ENCODE measurements at regions of chr7 and their contacts with region 1.

Region 1: GRCh38 chr7:47474937-47475878 is 106.7 kb downstream of the TNS3 start:
- DNase-seq: peak; percentile 98
- ATAC-seq: peak; percentile 85
- H3K4me3 ChIP-seq: peak overlapping the region in 1 of 3 experiments; percentile 44; a peak in 2 of 6 replicates
- H3K27ac ChIP-seq: peak overlapping the region; percentile 82
- H3K4me1 ChIP-seq: peaks cover 97% of the 10 kb centered on the region
- H3K27me3 ChIP-seq: no peaks in the 10 kb centered on the region
- CTCF ChIP-seq: peak; percentile 55
- EP300 ChIP-seq: peak; percentile 67 to 87
- POLR2A ChIP-seq: peak in 1 of 2 experiments; percentile 88; a peak in 2 of 4 replicates
- RAD21 ChIP-seq: peak; percentile 75

Region 2: DNA sequence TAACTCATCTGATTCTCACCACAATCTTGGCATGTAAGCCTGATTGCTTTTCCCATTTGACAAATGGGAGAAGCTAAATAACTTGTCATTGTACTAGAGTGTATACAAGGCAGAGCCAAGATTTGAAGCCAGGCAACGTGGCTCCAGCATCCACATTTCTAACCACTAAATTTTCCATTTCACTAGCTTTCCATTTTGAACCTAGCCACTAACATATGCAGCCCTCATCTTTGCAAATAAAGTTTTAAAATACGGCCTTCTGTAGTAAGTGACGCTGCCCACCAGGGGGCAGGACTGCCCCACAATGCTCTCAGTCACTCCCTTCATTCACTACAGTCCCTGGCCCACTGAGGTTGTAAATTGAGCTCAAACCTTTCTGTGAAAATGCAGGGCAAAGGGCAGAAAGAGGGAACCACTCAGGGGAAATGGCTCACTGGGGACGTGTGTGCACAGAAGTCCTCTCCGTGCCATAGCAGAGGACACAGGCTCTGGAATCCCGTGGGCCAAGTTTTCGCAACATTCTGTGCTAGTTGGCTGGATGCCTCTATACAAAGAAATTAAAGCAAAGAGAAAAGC is 209.0 kb before region 1 on chr7:
- CTCF ChIA-PET with region 1: no interaction called
- POLR2A ChIA-PET with region 1: interaction called, 5 read pairs
- in situ Hi-C with region 1: no loop called
- intact Hi-C with region 1: loop called (anchors 1 kb)
- DNase-seq: peak; percentile 82
- ATAC-seq: peak; percentile 93
- H3K4me3 ChIP-seq: peak overlapping the region in 1 of 3 experiments; percentile 15; a peak in 1 of 6 replicates
- H3K27ac ChIP-seq: peak overlapping the region; percentile 50
- H3K4me1 ChIP-seq: peaks cover 14% of the 10 kb centered on the region
- H3K27me3 ChIP-seq: no peaks in the 10 kb centered on the region
- CTCF ChIP-seq: peak; percentile 93
- EP300 ChIP-seq: no peak
- POLR2A ChIP-seq: no peak
- RAD21 ChIP-seq: peak; percentile 91

Region 3: GRCh38 chr7:47285860-47286522 is 189.2 kb before region 1 on chr7:
- CTCF ChIA-PET with region 1: no interaction called
- POLR2A ChIA-PET with region 1: no interaction called
- in situ Hi-C with region 1: no loop called
- intact Hi-C with region 1: no loop called
- DNase-seq: no peak
- ATAC-seq: no peak
- H3K4me3 ChIP-seq: no peak overlapping the region
- H3K27ac ChIP-seq: no peak overlapping the region
- H3K4me1 ChIP-seq: peaks cover 24% of the 10 kb centered on the region
- H3K27me3 ChIP-seq: no peaks in the 10 kb centered on the region
- CTCF ChIP-seq: no peak
- EP300 ChIP-seq: no peak
- POLR2A ChIP-seq: no peak
- RAD21 ChIP-seq: no peak

Region 4: DNA sequence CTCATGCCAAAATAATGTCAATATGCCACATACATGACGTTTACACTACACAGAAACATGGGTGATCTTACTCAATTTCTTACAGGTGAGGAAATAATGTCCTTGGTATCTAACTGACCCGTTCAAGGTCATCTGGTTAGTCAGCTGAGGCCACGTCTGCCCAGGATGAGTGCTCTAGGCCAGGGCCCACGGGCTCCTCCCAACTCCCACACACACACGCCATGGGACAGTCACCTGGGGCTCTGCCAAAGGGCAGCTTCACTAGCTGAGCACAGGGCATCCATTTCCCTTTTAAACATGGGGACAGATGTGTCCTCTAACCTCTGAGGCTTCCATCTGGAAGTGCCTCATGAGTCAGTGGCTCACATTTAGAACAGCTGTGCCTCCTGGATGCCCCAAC is 17.2 kb before region 1 on chr7:
- CTCF ChIA-PET with region 1: no interaction called
- POLR2A ChIA-PET with region 1: interaction called, 21 read pairs
- in situ Hi-C with region 1: no loop called
- intact Hi-C with region 1: no loop called
- DNase-seq: peak; percentile 37
- ATAC-seq: peak; percentile 54
- H3K4me3 ChIP-seq: no peak overlapping the region
- H3K27ac ChIP-seq: no peak overlapping the region
- H3K4me1 ChIP-seq: peaks cover 55% of the 10 kb centered on the region
- H3K27me3 ChIP-seq: no peaks in the 10 kb centered on the region
- CTCF ChIP-seq: no peak
- EP300 ChIP-seq: no peak
- POLR2A ChIP-seq: no peak
- RAD21 ChIP-seq: no peak

Region 5: DNA sequence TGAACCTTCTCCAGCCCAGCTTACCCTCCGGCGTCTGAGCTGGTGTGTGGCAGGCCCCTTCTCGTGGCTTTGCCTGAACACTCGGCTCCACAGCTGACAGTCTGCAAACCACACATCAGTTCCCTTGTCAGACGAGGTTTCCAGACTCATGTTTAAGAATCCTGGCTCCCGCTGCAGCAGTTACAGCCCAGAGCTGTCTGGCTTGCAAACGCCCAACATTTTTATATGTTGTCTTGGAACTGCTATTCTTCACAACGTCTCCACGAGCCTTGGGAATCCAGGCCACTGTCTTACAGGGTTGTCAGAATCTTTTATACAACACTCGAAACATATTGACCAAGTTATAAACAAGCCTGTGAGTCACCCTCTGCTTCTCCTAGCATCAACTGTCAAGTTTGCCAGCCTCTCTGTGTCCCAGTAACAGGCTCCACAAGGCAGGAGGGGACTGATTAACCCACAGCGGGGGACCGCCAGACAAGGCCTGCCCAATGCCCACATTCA is 38.6 kb after region 1 on chr7:
- CTCF ChIA-PET with region 1: no interaction called
- POLR2A ChIA-PET with region 1: interaction called, 10 read pairs
- in situ Hi-C with region 1: no loop called
- intact Hi-C with region 1: loop called (anchors 5 kb)
- DNase-seq: no peak
- ATAC-seq: peak; percentile 25; the same call in 1 of the 3 replicates
- H3K4me3 ChIP-seq: no peak overlapping the region
- H3K27ac ChIP-seq: peak overlapping the region; percentile 25
- H3K4me1 ChIP-seq: peaks cover 79% of the 10 kb centered on the region
- H3K27me3 ChIP-seq: no peaks in the 10 kb centered on the region
- CTCF ChIP-seq: no peak
- EP300 ChIP-seq: no peak
- POLR2A ChIP-seq: no peak
- RAD21 ChIP-seq: no peak

Region 6: GRCh38 chr7:47536661-47537611 is 61.7 kb after region 1 on chr7:
- CTCF ChIA-PET with region 1: no interaction called
- POLR2A ChIA-PET with region 1: interaction called, 16 read pairs
- in situ Hi-C with region 1: no loop called
- intact Hi-C with region 1: loop called (anchors 2 kb)
- DNase-seq: no peak
- ATAC-seq: no peak
- H3K4me3 ChIP-seq: peak overlapping the region; percentile 6 to 72 (median 41); a peak in 5 of 6 replicates
- H3K27ac ChIP-seq: peak overlapping the region; percentile 86
- H3K4me1 ChIP-seq: peaks cover 96% of the 10 kb centered on the region
- H3K27me3 ChIP-seq: no peaks in the 10 kb centered on the region; a peak in 1 of 5 replicates
- CTCF ChIP-seq: no peak
- EP300 ChIP-seq: no peak
- POLR2A ChIP-seq: no peak
- RAD21 ChIP-seq: no peak

Region 7: DNA sequence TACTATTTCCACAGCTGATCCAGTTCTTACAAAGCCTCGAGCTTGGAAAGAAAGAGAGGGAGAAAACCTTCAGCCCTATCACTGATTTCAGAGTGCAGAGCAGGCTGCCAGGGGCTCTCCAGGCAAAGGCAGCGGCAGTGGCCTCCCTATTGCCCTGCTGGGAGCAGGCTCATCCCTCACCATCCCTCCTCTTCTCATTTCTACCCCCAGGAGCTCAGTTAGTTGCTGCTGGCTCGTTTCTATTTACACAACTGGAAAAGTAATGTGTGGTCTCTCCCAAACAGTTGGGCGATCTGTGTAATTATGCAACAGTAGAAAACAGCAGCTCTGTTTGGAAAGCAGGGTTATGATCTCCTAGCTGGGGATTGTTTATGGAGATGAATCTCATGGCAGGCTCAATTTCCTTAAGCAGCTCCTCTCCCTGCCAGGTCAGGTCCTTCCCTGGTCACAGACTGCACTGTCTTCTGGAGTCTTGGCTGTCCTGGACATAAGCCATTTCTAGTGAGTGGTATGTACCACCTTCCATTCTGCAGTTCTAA is 135.4 kb after region 1 on chr7:
- CTCF ChIA-PET with region 1: no interaction called
- POLR2A ChIA-PET with region 1: interaction called, 6 read pairs
- in situ Hi-C with region 1: no loop called
- intact Hi-C with region 1: loop called (anchors 1 kb)
- DNase-seq: peak; percentile 85
- ATAC-seq: peak; percentile 80
- H3K4me3 ChIP-seq: peak overlapping the region; percentile 34 to 59 (median 38)
- H3K27ac ChIP-seq: peak overlapping the region; percentile 71
- H3K4me1 ChIP-seq: peaks cover 61% of the 10 kb centered on the region
- H3K27me3 ChIP-seq: no peaks in the 10 kb centered on the region
- CTCF ChIP-seq: no peak
- EP300 ChIP-seq: peak in 1 of 2 experiments; percentile 60; a peak in 2 of 4 replicates
- POLR2A ChIP-seq: 0 out of 4 replicates have a peak, but pooled peaks of 1 of the 2 experiments have one; percentile 23
- RAD21 ChIP-seq: no peak

Region 8: DNA sequence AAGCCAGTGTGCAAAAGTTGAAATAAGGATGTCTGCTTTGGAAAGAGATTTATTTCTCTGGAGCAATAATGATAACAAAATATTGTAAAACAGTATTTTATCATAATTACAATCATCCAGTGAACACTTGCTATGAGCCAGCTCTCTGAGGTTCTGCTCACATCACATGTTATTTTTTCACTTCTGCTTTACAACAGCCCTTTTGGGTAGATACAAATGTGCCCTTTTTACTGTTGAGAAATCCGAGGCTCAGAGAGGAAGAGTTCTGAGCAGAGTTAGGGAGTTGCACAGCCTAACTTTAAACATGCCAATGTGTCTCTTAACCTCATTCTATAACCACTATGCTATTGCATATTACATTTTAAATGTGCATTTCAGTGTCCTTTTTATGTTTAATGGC is 1216.6 kb after region 1 on chr7:
- CTCF ChIA-PET with region 1: no interaction called
- POLR2A ChIA-PET with region 1: no interaction called
- in situ Hi-C with region 1: no loop called
- intact Hi-C with region 1: no loop called
- DNase-seq: no peak
- ATAC-seq: no peak
- H3K4me3 ChIP-seq: no peak overlapping the region
- H3K27ac ChIP-seq: no peak overlapping the region
- H3K4me1 ChIP-seq: no peaks in the 10 kb centered on the region
- H3K27me3 ChIP-seq: no peaks in the 10 kb centered on the region
- CTCF ChIP-seq: no peak
- EP300 ChIP-seq: no peak
- POLR2A ChIP-seq: no peak
- RAD21 ChIP-seq: no peak